Gastrocnemius medialis (tissue), 4 donors: ENCODE measurements at regions of chr17 and their contacts with region 1.

Region 1: DNA sequence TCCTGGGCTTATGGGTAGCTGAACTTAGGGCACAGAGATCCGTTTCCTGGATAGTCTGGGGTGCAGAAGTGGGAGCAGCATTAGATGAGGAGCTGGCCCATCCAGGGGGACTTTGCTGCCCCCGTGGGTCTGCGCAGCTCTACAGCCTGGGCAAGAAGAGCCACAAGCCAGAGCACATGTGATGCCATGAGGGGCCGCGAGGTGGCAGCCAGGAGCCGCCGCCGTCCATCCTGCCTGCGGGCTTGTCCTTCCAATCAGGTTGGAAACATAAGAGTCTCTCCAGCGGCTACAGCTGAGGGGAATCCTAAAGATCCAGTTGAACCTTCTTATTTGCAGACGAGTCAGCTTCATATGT is 21.9 kb downstream of the C1QTNF1 start:
- DNase-seq: peak; percentile 57 to 61
- ATAC-seq: peak; percentile 70 to 71
- H3K4me3 ChIP-seq: no peak overlapping the region
- H3K27ac ChIP-seq: peak overlapping the region; percentile 51 to 67 (median 59)
- H3K4me1 ChIP-seq: peaks cover 10 to 13% of the 10 kb centered on the region in 2 donors
- H3K27me3 ChIP-seq: peaks cover 0 to 3% (median 2%) of the 10 kb centered on the region in 3 donors
- CTCF ChIP-seq: peak; percentile 72 to 96 (median 86)
- POLR2A ChIP-seq: no peak

Region 2: GRCh38 chr17:79065105-79065670 is 19.4 kb after region 1 on chr17:
- in situ Hi-C with region 1: no loop called
- intact Hi-C with region 1: no loop called
- DNase-seq: peak in 1 of 2 donors; percentile 38
- ATAC-seq: peak; percentile 78 to 85
- H3K4me3 ChIP-seq: no peak overlapping the region
- H3K27ac ChIP-seq: no peak overlapping the region
- H3K4me1 ChIP-seq: peaks cover 0 to 4% of the 10 kb centered on the region in 2 donors
- H3K27me3 ChIP-seq: no peaks in the 10 kb centered on the region
- CTCF ChIP-seq: peak in 4 of 5 experiments; percentile 62 to 72 (median 68)
- POLR2A ChIP-seq: no peak

Region 3: GRCh38 chr17:79082311-79083190 is 36.7 kb after region 1 on chr17:
- in situ Hi-C with region 1: loop called in 1 of 4 experiments (anchors 5 kb)
- intact Hi-C with region 1: loop called (anchors 2 kb)
- DNase-seq: no peak
- ATAC-seq: peak in 1 of 2 donors; percentile 58
- H3K4me3 ChIP-seq: no peak overlapping the region
- H3K27ac ChIP-seq: peak overlapping the region in 2 of 4 donors; percentile 30 to 31
- H3K4me1 ChIP-seq: peaks cover 11 to 14% of the 10 kb centered on the region in 2 donors
- H3K27me3 ChIP-seq: no peaks in the 10 kb centered on the region
- CTCF ChIP-seq: peak; percentile 54 to 80 (median 76)
- POLR2A ChIP-seq: no peak

Region 4: DNA sequence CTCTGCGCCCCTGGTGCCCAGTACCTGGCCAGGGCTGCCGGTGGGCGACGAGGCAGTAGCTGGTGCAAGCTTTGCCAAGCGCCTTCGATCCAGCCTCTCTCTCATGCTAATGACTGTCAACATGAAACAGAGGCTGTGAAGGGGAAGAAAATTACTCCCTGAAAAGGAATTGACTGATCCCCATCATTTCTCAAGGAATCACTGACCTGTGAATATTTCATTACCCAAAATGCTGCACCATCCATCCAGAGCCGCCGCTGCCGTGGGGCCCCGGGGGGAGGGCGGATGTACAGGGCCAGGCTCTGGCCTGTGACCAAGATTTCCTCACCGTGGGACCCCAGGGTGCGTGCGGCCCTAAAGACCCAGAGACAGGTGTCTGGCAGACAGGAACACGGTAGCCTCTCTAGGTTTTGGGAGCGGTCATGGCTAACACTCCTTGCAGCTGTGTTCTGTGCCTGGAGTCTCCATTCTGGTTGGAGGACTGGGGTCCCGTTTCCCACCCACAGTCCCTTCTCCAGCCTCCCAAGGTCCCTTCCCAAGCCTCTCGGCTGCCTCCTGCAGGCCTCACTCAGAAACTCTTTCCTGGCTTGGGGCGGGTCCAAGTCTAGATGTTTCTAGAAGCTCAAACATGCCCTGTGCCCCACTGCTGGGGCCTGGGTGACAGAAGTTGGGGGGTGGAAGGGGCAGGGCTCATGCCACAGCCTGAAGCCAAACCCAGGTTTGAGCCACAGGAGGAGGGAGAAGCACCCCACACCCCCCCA is 102.1 kb after region 1 on chr17:
- in situ Hi-C with region 1: no loop called
- intact Hi-C with region 1: no loop called
- DNase-seq: no peak
- ATAC-seq: no peak
- H3K4me3 ChIP-seq: no peak overlapping the region
- H3K27ac ChIP-seq: no peak overlapping the region
- H3K4me1 ChIP-seq: no peaks in the 10 kb centered on the region
- H3K27me3 ChIP-seq: peaks cover 22 to 59% (median 28%) of the 10 kb centered on the region in 3 donors
- CTCF ChIP-seq: no peak
- POLR2A ChIP-seq: no peak